Activated CD4-positive, alpha-beta memory T cell treated with anti-CD3 and anti-CD28 coated beads for 36 hours (primary cell): ENCODE measurements at regions of chr1 and their contacts with region 1.

Region 1: DNA sequence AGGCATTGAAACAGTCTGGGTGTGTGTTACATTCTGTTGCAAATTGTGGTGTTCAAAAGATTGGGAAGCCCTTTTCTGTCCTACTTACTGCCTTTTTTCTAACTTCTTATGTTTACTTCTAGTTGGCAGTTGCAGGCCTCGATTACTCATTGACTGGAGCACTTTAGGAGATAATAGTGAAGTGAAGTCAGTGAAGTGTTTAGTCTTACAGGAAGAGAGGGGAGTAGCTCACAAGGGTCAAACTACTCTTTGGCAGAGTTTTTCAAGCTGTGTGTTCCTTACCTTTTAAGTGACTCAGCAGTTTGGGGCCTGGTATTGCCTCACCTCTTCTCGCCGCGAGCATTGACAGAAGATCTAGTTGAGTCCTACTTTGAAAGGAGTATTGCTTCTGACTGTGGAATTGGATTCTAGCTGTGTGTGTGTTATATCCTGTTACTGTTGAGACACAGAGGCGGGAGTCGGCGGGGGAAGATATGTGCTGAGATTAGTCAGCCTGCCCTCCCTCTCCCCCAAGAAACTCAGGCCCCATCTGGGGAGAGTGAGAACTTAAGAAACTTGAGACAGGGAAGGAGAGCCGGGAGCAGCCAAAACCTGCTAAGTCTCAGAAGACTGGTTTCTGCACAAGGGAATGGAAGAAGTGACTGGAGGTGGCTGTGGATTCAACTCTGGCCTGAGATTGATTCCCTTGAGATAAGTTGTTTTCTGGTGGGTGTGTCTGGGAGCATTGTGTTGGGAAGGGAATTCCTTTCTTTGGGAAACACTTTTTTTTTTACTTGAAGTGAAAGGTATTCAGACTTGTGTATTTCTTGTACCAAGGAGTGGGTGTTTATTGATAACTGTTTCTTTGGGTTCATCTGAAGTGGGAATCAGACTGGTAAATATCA is 19.4 kb downstream of the AHCYL1 start:
- DNase-seq: peak; percentile 81
- H3K4me3 Mint-ChIP-seq: peak overlapping the region; percentile 30
- H3K27ac Mint-ChIP-seq: peak overlapping the region; percentile 82
- H3K4me1 Mint-ChIP-seq: peaks cover 24% of the 10 kb centered on the region
- H3K27me3 Mint-ChIP-seq: no peaks in the 10 kb centered on the region

Region 2: DNA sequence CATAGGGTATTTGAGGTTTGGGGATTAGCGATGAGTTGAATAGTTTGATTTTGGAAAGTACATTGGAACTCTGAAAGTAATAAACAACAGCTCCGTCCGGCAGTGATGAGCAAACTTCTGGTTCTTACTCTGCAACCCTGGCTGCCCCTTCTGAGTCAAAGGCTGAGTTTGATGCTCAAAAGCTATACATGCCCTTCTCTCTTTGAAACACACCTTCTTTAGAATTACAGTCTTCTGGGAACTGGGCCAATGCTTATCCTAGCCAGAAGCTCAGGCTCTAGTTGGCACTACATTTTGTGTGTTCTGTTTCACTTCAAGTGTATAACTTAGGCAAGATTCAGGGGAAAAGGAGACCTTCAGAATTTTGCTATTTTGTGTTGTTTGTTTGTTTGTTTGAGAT is 10.1 kb before region 1 on chr1:
- CTCF ChIA-PET with region 1: no interaction called
- POLR2A ChIA-PET with region 1: interaction called, 6 read pairs
- intact Hi-C with region 1: loop called (anchors 1 kb)
- DNase-seq: peak; percentile 43
- H3K4me3 Mint-ChIP-seq: no peak overlapping the region
- H3K27ac Mint-ChIP-seq: no peak overlapping the region
- H3K4me1 Mint-ChIP-seq: peaks cover 40% of the 10 kb centered on the region
- H3K27me3 Mint-ChIP-seq: no peaks in the 10 kb centered on the region